PC-3 (cell line): ENCODE measurements at regions of chr2 and their contacts with region 1.

Region 1: GRCh38 chr2:220512419-220512818 is 885.0 kb downstream of the SLC4A3 start:
- DNase-seq: peak; percentile 74
- ATAC-seq: peak; percentile 30; the same call in 1 of the 2 replicates
- H3K4me3 ChIP-seq: peak overlapping the region; percentile 25; the same call in 1 of the 2 replicates
- H3K27ac ChIP-seq: peak overlapping the region; percentile 76
- H3K4me1 ChIP-seq: peaks cover 48% of the 10 kb centered on the region
- H3K27me3 ChIP-seq: no peaks in the 10 kb centered on the region
- CTCF ChIP-seq: no peak

Region 2: DNA sequence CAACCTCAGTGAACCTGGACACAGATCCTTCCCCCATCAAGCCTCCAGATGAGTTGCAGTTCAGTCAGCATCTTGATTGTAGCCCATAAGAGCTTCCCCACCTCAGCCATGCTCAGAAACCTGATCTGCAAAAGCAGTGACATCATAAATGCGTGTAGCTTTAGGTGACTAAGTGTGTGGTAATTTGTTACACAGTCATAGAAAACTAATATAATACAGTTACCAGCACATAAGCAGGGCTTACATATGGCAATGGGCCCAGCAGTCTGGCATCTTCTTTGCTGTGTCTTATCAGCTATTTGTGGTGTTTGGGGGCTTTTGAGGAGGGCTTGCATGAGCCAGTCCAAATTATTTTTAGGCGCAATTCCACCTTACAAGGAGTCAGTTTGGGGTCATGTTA is 78.0 kb before region 1 on chr2:
- CTCF ChIA-PET with region 1: no interaction called
- POLR2A ChIA-PET with region 1: no interaction called
- intact Hi-C with region 1: no loop called
- DNase-seq: peak; percentile 65
- ATAC-seq: peak; percentile 77
- H3K4me3 ChIP-seq: no peak overlapping the region
- H3K27ac ChIP-seq: peak overlapping the region; percentile 61
- H3K4me1 ChIP-seq: peaks cover 25% of the 10 kb centered on the region
- H3K27me3 ChIP-seq: no peaks in the 10 kb centered on the region
- CTCF ChIP-seq: no peak

Region 3: GRCh38 chr2:220556658-220557057 is 44.2 kb after region 1 on chr2:
- CTCF ChIA-PET with region 1: no interaction called
- POLR2A ChIA-PET with region 1: no interaction called
- intact Hi-C with region 1: no loop called
- DNase-seq: peak; percentile 36
- ATAC-seq: peak; percentile 38
- H3K4me3 ChIP-seq: no peak overlapping the region
- H3K27ac ChIP-seq: no peak overlapping the region
- H3K4me1 ChIP-seq: peaks cover 10% of the 10 kb centered on the region
- H3K27me3 ChIP-seq: no peaks in the 10 kb centered on the region
- CTCF ChIP-seq: no peak

Region 4: DNA sequence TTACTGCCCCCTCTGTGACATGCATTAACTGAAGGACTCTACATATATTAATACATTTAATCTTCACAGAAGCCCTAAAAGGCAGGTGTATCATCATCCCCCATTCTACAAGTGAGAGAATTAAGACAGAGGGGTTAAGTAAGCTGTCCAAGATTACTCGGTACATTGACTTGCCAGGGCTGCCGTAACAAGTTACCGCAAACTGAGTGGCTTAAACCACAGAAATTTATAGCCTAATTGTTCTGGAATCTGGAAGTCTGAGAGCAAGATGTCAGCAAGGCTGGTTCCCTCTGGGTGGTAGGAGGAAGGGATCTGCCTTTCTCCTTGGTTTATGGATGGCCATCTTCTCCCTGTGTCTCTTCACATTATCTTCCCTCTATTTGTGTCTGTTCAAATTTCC is 454.2 kb after region 1 on chr2:
- CTCF ChIA-PET with region 1: no interaction called
- POLR2A ChIA-PET with region 1: no interaction called
- intact Hi-C with region 1: loop called (anchors 10 kb)
- DNase-seq: peak; percentile 78
- ATAC-seq: peak; percentile 69
- H3K4me3 ChIP-seq: no peak overlapping the region
- H3K27ac ChIP-seq: no peak overlapping the region
- H3K4me1 ChIP-seq: peaks cover 17% of the 10 kb centered on the region
- H3K27me3 ChIP-seq: no peaks in the 10 kb centered on the region
- CTCF ChIP-seq: no peak